ENCODE measurements at regions of chr10 and their contacts with region 1.

Region 1: DNA sequence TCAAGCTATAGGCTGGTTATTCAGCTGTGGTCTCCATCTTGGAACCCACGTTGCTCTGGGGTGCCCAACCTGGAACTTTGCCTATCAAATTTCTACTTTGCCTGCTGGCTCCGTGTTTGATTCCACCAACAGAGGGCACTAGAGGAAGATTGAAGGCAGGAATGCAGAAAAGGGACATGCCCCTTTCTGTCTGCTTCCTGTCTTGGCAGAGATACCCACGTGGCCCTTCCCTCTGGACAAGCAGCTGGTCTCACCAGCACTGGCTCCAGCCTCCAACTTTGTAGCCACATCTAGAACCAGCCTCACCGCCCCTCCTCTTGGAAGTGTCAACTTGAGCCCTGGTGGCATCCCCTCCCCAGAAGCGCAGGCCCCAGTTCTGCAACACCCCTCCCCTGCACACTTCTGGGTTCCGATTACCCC is 52.1 kb upstream of the ZNF438 start:
- DNase-seq: peak; percentile 14 to 67 (median 56)
- ATAC-seq: peak; percentile 66
- H3K4me3 ChIP-seq: no peak overlapping the region
- H3K4me3 Mint-ChIP-seq: no peak overlapping the region
- H3K27ac ChIP-seq: no peak overlapping the region
- H3K27ac Mint-ChIP-seq: no peak overlapping the region
- H3K4me1 ChIP-seq: no peaks in the 10 kb centered on the region
- H3K4me1 Mint-ChIP-seq: peaks cover 0 to 12% (median 3%) of the 10 kb centered on the region in 7 donors
- H3K27me3 ChIP-seq: no peaks in the 10 kb centered on the region
- H3K27me3 Mint-ChIP-seq: peaks cover 0 to 5% (median 0%) of the 10 kb centered on the region in 5 donors

Region 2: GRCh38 chr10:31133628-31134302 is 50.0 kb after region 1 on chr10:
- CTCF ChIA-PET with region 1: interaction called, 3 read pairs
- POLR2A ChIA-PET with region 1: no interaction called
- intact Hi-C with region 1: loop called (anchors 1 to 2 kb)
- DNase-seq: peak; percentile 14 to 67 (median 38)
- ATAC-seq: peak; percentile 78
- H3K4me3 ChIP-seq: peak overlapping the region; percentile 66
- H3K4me3 Mint-ChIP-seq: peak overlapping the region; percentile 71 to 87 (median 82)
- H3K27ac ChIP-seq: peak overlapping the region; percentile 80
- H3K27ac Mint-ChIP-seq: peak overlapping the region; percentile 72 to 92 (median 87)
- H3K4me1 ChIP-seq: peaks cover 0 to 33% of the 10 kb centered on the region in 2 donors
- H3K4me1 Mint-ChIP-seq: peaks cover 18 to 68% (median 44%) of the 10 kb centered on the region in 7 donors
- H3K27me3 ChIP-seq: no peaks in the 10 kb centered on the region
- H3K27me3 Mint-ChIP-seq: no peaks in the 10 kb centered on the region

Region 3: GRCh38 chr10:31353574-31353973 is 269.8 kb after region 1 on chr10:
- CTCF ChIA-PET with region 1: no interaction called
- POLR2A ChIA-PET with region 1: no interaction called
- intact Hi-C with region 1: loop called in 1 of 2 experiments (anchors 2 kb)
- DNase-seq: peak in 2 of 9 donors; percentile 21 to 41
- ATAC-seq: peak; percentile 73
- H3K4me3 ChIP-seq: no peak overlapping the region
- H3K4me3 Mint-ChIP-seq: peak overlapping the region in 1 of 10 donors; percentile 8
- H3K27ac ChIP-seq: no peak overlapping the region
- H3K27ac Mint-ChIP-seq: no peak overlapping the region
- H3K4me1 ChIP-seq: peaks cover 4 to 12% of the 10 kb centered on the region in 2 donors
- H3K4me1 Mint-ChIP-seq: peaks cover 35 to 88% (median 76%) of the 10 kb centered on the region in 7 donors
- H3K27me3 ChIP-seq: no peaks in the 10 kb centered on the region
- H3K27me3 Mint-ChIP-seq: no peaks in the 10 kb centered on the region

Region 4: GRCh38 chr10:31426401-31426800 is 342.6 kb after region 1 on chr10:
- CTCF ChIA-PET with region 1: no interaction called
- POLR2A ChIA-PET with region 1: no interaction called
- intact Hi-C with region 1: no loop called
- DNase-seq: no peak
- ATAC-seq: no peak
- H3K4me3 ChIP-seq: no peak overlapping the region
- H3K4me3 Mint-ChIP-seq: no peak overlapping the region
- H3K27ac ChIP-seq: no peak overlapping the region
- H3K27ac Mint-ChIP-seq: no peak overlapping the region
- H3K4me1 ChIP-seq: peaks cover 0 to 9% of the 10 kb centered on the region in 2 donors
- H3K4me1 Mint-ChIP-seq: peaks cover 20 to 74% (median 61%) of the 10 kb centered on the region in 7 donors
- H3K27me3 ChIP-seq: no peaks in the 10 kb centered on the region
- H3K27me3 Mint-ChIP-seq: no peaks in the 10 kb centered on the region

Region 5: DNA sequence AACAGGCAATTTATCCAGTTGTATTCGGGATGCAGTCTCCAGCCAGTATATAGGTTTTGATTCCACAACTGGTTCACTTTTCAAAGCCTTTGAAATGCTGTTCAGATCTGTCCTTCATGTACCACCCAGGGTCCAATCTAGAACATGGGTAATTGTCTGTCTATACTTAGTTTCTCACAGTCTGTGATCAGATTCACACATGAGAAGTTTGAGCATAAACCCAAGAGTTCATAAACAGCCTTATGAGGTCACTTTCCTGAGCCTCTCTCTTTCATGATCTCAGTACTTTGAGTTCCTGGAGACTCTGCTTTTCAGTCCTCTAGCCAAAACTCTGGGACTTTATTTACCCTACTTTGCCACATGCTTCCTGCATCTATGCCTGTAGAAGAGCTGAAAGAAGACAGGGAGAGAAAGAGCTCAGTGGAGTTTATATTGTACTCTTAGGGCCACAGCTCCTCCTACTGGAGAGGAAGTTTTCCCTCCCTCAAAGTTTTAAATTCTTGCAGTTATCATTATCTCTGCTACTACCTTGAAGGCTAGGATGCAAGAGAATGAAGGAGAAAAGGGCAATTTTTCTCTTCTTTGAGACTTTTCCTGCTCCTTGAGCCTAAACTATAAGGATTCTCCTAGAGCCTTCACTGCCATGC is 407.2 kb after region 1 on chr10:
- CTCF ChIA-PET with region 1: interaction called, 15 read pairs
- POLR2A ChIA-PET with region 1: interaction called, 3 read pairs
- intact Hi-C with region 1: loop called (anchors 1 kb)
- DNase-seq: peak in 6 of 9 donors; percentile 30 to 50 (median 36)
- ATAC-seq: peak; percentile 72
- H3K4me3 ChIP-seq: no peak overlapping the region
- H3K4me3 Mint-ChIP-seq: no peak overlapping the region
- H3K27ac ChIP-seq: no peak overlapping the region
- H3K27ac Mint-ChIP-seq: peak overlapping the region in 1 of 9 donors; percentile 1
- H3K4me1 ChIP-seq: no peaks in the 10 kb centered on the region
- H3K4me1 Mint-ChIP-seq: peaks cover 0 to 12% (median 0%) of the 10 kb centered on the region in 7 donors
- H3K27me3 ChIP-seq: no peaks in the 10 kb centered on the region
- H3K27me3 Mint-ChIP-seq: no peaks in the 10 kb centered on the region

Region 6: DNA sequence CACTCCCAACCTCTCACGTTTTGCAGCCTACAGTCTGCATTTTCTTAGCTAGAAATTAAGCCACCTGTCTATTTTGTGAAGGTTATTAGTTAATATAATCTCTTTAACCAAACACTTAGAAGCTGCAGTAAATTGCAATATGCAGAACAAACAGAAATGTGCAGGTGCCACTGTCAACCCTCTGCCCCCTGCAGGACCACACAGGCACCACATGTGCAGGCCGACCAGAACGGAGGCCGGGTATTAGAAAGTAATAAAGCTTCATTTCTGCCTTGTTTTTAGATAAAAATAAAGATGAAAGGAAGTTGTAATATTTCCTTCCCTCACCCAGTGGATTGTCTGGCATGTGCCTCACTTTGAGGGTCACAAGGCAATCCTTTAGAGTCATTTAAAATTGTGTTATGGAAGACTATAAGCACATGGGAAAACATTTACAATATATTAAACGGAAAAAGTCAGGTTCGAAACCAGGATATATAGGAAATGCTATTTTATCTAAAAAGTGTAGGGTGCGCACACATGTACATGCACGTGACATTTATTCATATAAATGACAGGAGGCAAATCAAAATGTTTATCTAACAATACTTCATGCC is 686.6 kb after region 1 on chr10:
- CTCF ChIA-PET with region 1: no interaction called
- POLR2A ChIA-PET with region 1: no interaction called
- intact Hi-C with region 1: loop called in 1 of 2 experiments (anchors 1 kb)
- DNase-seq: peak; percentile 27 to 69 (median 57)
- ATAC-seq: peak; percentile 92
- H3K4me3 ChIP-seq: no peak overlapping the region
- H3K4me3 Mint-ChIP-seq: no peak overlapping the region
- H3K27ac ChIP-seq: no peak overlapping the region
- H3K27ac Mint-ChIP-seq: no peak overlapping the region
- H3K4me1 ChIP-seq: no peaks in the 10 kb centered on the region
- H3K4me1 Mint-ChIP-seq: no peaks in the 10 kb centered on the region
- H3K27me3 ChIP-seq: no peaks in the 10 kb centered on the region
- H3K27me3 Mint-ChIP-seq: no peaks in the 10 kb centered on the region

Region 7: GRCh38 chr10:31808258-31809218 is 724.8 kb after region 1 on chr10:
- CTCF ChIA-PET with region 1: interaction called, 3 read pairs
- POLR2A ChIA-PET with region 1: no interaction called
- intact Hi-C with region 1: loop called (anchors 1 to 5 kb)
- DNase-seq: peak in 8 of 9 donors; percentile 21 to 62 (median 48)
- ATAC-seq: peak; percentile 77
- H3K4me3 ChIP-seq: no peak overlapping the region
- H3K4me3 Mint-ChIP-seq: peak overlapping the region in 3 of 10 donors; percentile 51 to 78 (median 56)
- H3K27ac ChIP-seq: no peak overlapping the region
- H3K27ac Mint-ChIP-seq: peak overlapping the region in 8 of 9 donors; percentile 17 to 94 (median 71)
- H3K4me1 ChIP-seq: no peaks in the 10 kb centered on the region
- H3K4me1 Mint-ChIP-seq: peaks cover 2 to 11% (median 6%) of the 10 kb centered on the region in 7 donors
- H3K27me3 ChIP-seq: no peaks in the 10 kb centered on the region
- H3K27me3 Mint-ChIP-seq: no peaks in the 10 kb centered on the region

Measured in naive thymus-derived CD4-positive, alpha-beta T cell (primary cell).